Transverse colon (tissue), 4 donors: ENCODE measurements at regions of chr16 and their contacts with region 1.

Region 1: GRCh38 chr16:8173111-8173644 is 417.1 kb downstream of the TMEM114 start:
- DNase-seq: peak; percentile 68
- H3K4me3 ChIP-seq: no peak overlapping the region
- H3K27ac ChIP-seq: no peak overlapping the region
- H3K4me1 ChIP-seq: no peaks in the 10 kb centered on the region
- H3K27me3 ChIP-seq: no peaks in the 10 kb centered on the region
- CTCF ChIP-seq: peak; percentile 70 to 82 (median 80)
- EP300 ChIP-seq: no peak
- POLR2A ChIP-seq: no peak

Region 2: DNA sequence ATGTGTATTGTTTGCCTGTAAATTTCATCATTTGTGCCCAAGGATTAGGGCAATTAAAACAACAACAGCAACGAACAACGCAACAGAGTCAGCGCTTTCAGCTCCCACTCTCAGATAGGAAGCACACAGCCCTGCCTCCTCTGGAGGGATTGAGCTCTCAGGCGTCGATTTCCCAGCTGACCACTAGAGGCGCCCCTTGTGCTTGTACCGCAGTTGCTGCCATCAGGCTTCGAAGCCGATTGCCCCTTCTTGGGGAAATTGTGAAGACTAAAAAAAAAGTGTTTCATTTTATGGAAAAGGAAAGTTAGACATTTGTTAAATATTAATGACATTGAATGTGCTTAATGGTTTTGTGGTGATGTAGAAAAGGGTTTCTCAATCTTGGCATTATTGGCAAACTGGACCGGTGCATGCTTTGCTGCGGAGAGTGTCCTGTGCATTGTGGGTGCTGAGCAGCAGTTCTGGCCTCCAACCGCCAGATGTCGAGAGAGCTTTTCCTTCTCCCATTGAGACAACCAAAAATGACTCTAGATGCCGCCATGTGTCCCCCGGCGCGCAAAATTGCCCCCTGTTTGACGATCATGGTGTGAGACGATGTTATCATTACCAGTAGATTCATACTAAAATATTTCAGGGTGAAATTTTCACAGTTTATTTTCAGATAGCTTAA is 1490.9 kb before region 1 on chr16:
- in situ Hi-C with region 1: loop called in 1 of 4 experiments (anchors 25 kb)
- intact Hi-C with region 1: no loop called
- DNase-seq: peak; percentile 26
- H3K4me3 ChIP-seq: no peak overlapping the region
- H3K27ac ChIP-seq: no peak overlapping the region
- H3K4me1 ChIP-seq: no peaks in the 10 kb centered on the region
- H3K27me3 ChIP-seq: peaks cover 4% of the 10 kb centered on the region
- CTCF ChIP-seq: peak; percentile 29 to 64 (median 56)
- EP300 ChIP-seq: no peak
- POLR2A ChIP-seq: no peak

Region 3: DNA sequence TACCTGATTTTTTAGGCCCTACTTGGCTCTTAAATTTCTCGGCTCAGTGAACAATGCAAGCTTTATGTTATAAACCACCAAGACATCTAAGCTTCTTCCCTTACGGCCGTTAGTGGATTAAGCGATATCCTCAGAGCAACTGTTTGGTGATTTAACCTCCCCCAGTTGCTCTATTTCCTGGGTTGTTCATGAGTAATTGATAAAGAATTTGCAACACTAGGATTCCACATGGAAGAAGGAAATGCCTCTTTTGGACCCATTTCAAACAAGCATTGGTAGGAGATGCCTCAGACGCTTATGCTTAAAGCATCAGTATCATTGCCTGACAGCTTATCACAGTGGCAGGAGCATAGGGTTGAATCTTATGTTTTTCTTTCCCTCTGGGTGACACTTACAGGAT is 775.3 kb before region 1 on chr16:
- in situ Hi-C with region 1: loop called in 1 of 4 experiments (anchors 25 kb)
- intact Hi-C with region 1: no loop called
- DNase-seq: no peak
- H3K4me3 ChIP-seq: no peak overlapping the region
- H3K27ac ChIP-seq: no peak overlapping the region
- H3K4me1 ChIP-seq: no peaks in the 10 kb centered on the region
- H3K27me3 ChIP-seq: no peaks in the 10 kb centered on the region
- CTCF ChIP-seq: no peak
- EP300 ChIP-seq: no peak
- POLR2A ChIP-seq: no peak